ENCODE measurements at regions of chr2 and their contacts with region 1.

Region 1: DNA sequence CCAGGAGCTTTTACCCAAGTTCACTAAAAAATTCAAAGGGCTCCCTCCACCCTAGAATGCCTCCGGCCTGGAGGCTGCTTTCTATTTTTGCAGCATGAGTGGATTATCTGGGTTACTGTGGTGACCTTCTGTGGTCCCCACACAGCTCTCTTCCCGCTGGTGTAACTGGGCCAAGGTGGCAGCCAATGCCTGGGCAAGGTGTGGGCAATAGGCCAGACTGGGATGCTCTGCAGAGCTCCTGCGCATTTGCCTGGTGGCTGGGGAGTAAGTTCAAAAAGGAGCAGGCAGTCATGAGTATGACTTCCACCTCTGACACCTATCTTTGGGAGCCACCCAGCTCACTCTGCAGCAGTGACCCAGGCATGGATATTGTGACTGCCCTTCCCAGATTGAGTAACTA is 130.5 kb upstream of the SPRED2 start:
- DNase-seq: no peak
- H3K4me3 ChIP-seq: no peak overlapping the region
- H3K27ac ChIP-seq: no peak overlapping the region
- H3K4me1 ChIP-seq: no peaks in the 10 kb centered on the region
- H3K27me3 ChIP-seq: no peaks in the 10 kb centered on the region
- CTCF ChIP-seq: no peak

Region 2: DNA sequence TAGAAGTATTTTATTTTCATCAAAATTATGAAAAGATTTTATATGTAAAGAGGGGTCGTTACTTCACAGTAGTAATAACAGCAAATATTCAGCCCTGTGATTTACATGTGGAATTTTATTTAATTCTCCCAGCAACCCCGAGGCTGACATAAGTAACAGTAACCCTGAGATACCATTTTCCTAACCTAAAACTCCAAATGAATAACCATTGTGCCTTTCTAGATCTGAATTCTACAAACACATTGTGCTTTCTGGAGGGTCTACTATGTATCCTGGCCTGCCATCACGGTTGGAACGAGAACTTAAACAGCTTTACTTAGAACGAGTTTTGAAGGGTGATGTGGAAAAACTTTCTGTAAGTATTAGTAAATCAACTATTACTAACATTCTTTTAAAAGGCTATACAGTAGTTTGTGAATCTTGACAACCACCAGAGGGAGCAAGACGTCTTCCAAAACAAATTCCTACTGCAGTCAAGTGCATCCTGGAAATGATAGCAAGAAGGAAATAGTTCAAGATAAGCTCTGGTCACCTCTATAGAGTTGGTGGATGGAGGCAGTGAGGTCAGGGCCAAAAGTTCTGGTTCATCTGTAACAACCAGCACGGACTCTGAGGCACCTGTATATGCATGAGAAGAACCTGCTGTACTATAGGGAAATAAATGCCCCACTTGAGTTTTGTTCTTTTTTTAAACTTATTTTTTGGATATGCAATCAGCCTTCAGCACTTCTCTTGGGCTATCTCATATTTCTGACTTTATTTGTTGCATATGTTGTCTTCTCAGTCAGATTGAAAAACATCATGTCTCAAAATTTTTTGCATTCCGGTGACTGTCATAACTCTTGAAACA is 297.8 kb before region 1 on chr2:
- intact Hi-C with region 1: loop called (anchors 5 kb)
- DNase-seq: no peak
- H3K4me3 ChIP-seq: no peak overlapping the region
- H3K27ac ChIP-seq: no peak overlapping the region
- H3K4me1 ChIP-seq: peaks cover 0 to 6% (median 2%) of the 10 kb centered on the region in 4 donors
- H3K27me3 ChIP-seq: no peaks in the 10 kb centered on the region
- CTCF ChIP-seq: peak; percentile 61 to 83

Region 3: GRCh38 chr2:65647249-65647842 is 84.5 kb after region 1 on chr2:
- intact Hi-C with region 1: no loop called
- DNase-seq: no peak
- H3K4me3 ChIP-seq: no peak overlapping the region
- H3K27ac ChIP-seq: no peak overlapping the region
- H3K4me1 ChIP-seq: no peaks in the 10 kb centered on the region
- H3K27me3 ChIP-seq: no peaks in the 10 kb centered on the region
- CTCF ChIP-seq: no peak

Measured in tibial artery (tissue), 4 donors.